Tibial artery (tissue), 4 donors: ENCODE measurements at regions of chr1 and their contacts with region 1.

Region 1: DNA sequence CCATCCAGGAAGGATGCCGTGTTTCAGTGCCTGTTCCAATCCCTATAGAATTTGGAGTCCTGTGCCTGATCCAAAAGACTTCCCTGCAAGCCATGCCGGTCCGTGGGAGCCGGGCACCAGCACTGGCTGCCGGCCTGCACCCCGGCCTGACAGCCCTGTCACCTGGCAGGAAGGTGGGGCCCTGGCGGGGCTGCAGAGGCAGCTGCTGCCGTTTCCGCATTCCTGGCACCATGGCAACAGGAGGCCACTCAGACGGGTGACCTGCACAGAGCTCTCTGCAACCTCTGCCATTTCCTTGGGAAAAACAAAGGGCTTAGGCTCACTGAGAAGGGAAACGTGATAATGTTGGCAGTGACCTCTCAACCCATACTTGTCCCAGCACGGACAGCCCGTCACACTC is 63.2 kb upstream of the TMEM51 start:
- DNase-seq: no peak
- H3K4me3 ChIP-seq: no peak overlapping the region
- H3K27ac ChIP-seq: peak overlapping the region in 1 of 2 donors; percentile 1
- H3K4me1 ChIP-seq: peaks cover 0 to 27% (median 17%) of the 10 kb centered on the region in 4 donors
- H3K27me3 ChIP-seq: no peaks in the 10 kb centered on the region
- CTCF ChIP-seq: no peak

Region 2: GRCh38 chr1:14915356-14916054 is 174.9 kb before region 1 on chr1:
- intact Hi-C with region 1: loop called (anchors 10 kb)
- DNase-seq: peak in 1 of 2 donors; percentile 50
- H3K4me3 ChIP-seq: no peak overlapping the region
- H3K27ac ChIP-seq: no peak overlapping the region
- H3K4me1 ChIP-seq: peaks cover 0 to 34% (median 23%) of the 10 kb centered on the region in 4 donors
- H3K27me3 ChIP-seq: no peaks in the 10 kb centered on the region
- CTCF ChIP-seq: peak; percentile 76 to 92

Region 3: GRCh38 chr1:15046487-15047165 is 43.7 kb before region 1 on chr1:
- intact Hi-C with region 1: no loop called
- DNase-seq: peak; percentile 53 to 76
- H3K4me3 ChIP-seq: no peak overlapping the region
- H3K27ac ChIP-seq: no peak overlapping the region
- H3K4me1 ChIP-seq: peaks cover 0 to 4% (median 1%) of the 10 kb centered on the region in 4 donors
- H3K27me3 ChIP-seq: no peaks in the 10 kb centered on the region
- CTCF ChIP-seq: peak; percentile 89 to 91

Region 4: GRCh38 chr1:15062479-15063099 is 27.8 kb before region 1 on chr1:
- intact Hi-C with region 1: loop called (anchors 5 kb)
- DNase-seq: no peak
- H3K4me3 ChIP-seq: no peak overlapping the region
- H3K27ac ChIP-seq: no peak overlapping the region
- H3K4me1 ChIP-seq: peaks cover 0 to 10% (median 5%) of the 10 kb centered on the region in 4 donors
- H3K27me3 ChIP-seq: no peaks in the 10 kb centered on the region
- CTCF ChIP-seq: peak; percentile 30 to 42